ENCODE measurements at regions of chr1 and their contacts with region 1.

Region 1: GRCh38 chr1:226702957-226703831 is 35.9 kb downstream of the ITPKB start:
- DNase-seq: peak; percentile 90
- ATAC-seq: peak; percentile 61
- H3K4me3 Mint-ChIP-seq: peak overlapping the region; percentile 84
- H3K27ac Mint-ChIP-seq: peak overlapping the region; percentile 97
- H3K4me1 Mint-ChIP-seq: peaks cover 85% of the 10 kb centered on the region
- H3K27me3 Mint-ChIP-seq: no peaks in the 10 kb centered on the region

Region 2: DNA sequence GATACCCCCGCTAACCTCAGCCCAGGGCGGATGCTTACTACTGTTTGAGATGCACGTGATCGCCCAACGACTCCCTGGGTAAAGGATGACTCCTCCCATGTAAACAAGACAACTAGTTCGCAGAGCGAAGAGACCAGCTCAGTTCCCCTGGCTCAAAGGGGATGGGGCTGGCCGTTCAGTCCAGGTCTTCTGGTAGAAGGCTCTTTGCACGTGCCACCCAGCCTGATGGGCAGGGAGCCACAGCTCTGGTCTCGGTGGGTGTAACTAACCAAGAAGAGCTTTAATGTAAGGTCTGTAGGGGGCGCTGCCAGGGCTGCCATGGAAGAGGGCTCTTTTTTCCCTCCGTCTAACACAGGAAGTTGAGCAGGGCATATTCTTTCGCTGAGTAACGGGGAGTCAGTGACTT is 245.9 kb before region 1 on chr1:
- CTCF ChIA-PET with region 1: no interaction called
- POLR2A ChIA-PET with region 1: no interaction called
- intact Hi-C with region 1: no loop called
- DNase-seq: peak; percentile 79
- ATAC-seq: peak; percentile 93
- H3K4me3 Mint-ChIP-seq: peak overlapping the region; percentile 55
- H3K27ac Mint-ChIP-seq: peak overlapping the region; percentile 76
- H3K4me1 Mint-ChIP-seq: peaks cover 12% of the 10 kb centered on the region
- H3K27me3 Mint-ChIP-seq: no peaks in the 10 kb centered on the region

Region 3: DNA sequence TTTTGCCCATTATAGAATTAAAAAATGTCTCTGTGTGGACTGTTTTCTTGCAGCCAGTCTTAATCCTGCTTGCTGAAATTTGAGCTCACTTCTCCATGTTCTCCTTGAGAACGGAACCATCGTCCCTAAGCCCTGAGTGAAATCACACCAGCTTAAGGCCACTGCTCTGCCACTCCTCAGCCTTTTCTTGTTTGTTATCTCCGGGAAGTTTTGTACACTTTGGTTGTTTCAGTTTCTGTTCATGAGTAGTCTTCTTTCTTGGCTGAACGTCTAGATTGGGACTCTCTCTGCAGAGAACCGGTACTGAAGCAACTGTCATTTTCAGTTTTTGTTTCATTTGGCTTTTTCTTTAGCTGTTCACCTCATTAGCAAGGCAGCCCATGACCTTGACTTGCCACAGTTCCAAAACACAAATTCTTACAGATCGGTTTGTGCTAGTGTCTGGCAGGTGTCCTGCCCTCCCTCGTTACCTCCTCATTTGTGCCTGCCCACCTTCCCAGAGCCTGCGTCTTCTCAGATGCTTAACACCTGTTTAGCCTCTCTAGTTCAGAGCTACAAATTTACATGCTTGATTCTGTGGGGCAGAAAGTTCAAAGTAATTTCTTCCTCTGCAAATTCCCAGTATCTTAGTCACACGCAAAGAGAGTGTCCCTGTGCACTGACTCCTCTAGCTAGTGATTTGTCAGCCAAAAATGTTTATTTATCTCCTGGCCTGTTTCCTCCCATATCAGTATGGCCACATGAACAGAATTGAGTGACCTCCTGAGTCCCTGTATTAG is 179.6 kb after region 1 on chr1:
- CTCF ChIA-PET with region 1: no interaction called
- POLR2A ChIA-PET with region 1: no interaction called
- intact Hi-C with region 1: loop called in 1 of 2 experiments (anchors 5 kb)
- DNase-seq: peak; percentile 54
- ATAC-seq: peak; percentile 92
- H3K4me3 Mint-ChIP-seq: peak overlapping the region; percentile 64
- H3K27ac Mint-ChIP-seq: peak overlapping the region; percentile 91
- H3K4me1 Mint-ChIP-seq: peaks cover 53% of the 10 kb centered on the region
- H3K27me3 Mint-ChIP-seq: no peaks in the 10 kb centered on the region